ENCODE measurements at regions of chr2 and their contacts with region 1.

Region 1: GRCh38 chr2:38315707-38316333 is 61.3 kb downstream of the ATL2 start:
- DNase-seq: no peak
- ATAC-seq: peak in 3 of 4 donors; percentile 61 to 73 (median 67)
- H3K4me3 ChIP-seq: no peak overlapping the region
- H3K27ac ChIP-seq: peak overlapping the region in 1 of 12 donors; percentile 64
- H3K4me1 ChIP-seq: peaks cover 0 to 9% (median 0%) of the 10 kb centered on the region in 12 donors
- H3K27me3 ChIP-seq: no peaks in the 10 kb centered on the region
- CTCF ChIP-seq: peak; percentile 64 to 91 (median 74)
- POLR2A ChIP-seq: no peak

Region 2: DNA sequence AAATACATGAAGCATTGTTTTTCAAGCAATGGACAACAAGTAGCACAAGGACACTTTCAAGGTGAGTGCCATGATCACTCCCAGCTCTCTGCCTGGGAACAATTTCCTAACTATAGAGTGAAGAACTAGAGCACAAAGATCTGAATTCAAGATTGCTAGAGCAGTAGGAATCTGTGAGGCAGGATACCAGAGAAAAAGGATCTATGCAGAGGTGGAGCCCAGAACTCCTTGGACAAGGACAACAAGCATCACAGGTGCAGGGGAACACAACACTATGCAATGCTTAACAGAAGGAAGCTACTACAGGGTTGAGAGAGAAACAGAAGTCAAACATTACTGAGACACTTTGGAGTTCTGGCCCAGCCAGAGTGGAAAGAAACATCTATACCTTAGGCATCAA is 36.5 kb after region 1 on chr2:
- intact Hi-C with region 1: loop called in 1 of 10 experiments (anchors 5 kb)
- DNase-seq: no peak
- ATAC-seq: no peak
- H3K4me3 ChIP-seq: no peak overlapping the region
- H3K27ac ChIP-seq: no peak overlapping the region
- H3K4me1 ChIP-seq: peaks cover 0 to 16% (median 8%) of the 10 kb centered on the region in 12 donors
- H3K27me3 ChIP-seq: no peaks in the 10 kb centered on the region
- CTCF ChIP-seq: no peak
- POLR2A ChIP-seq: no peak

Region 3: GRCh38 chr2:38442643-38443541 is 127.1 kb after region 1 on chr2:
- intact Hi-C with region 1: loop called in 4 of 10 experiments (anchors 5 to 10 kb)
- DNase-seq: peak in 2 of 5 donors; percentile 11 to 48
- ATAC-seq: peak in 3 of 4 donors; percentile 55 to 72 (median 64)
- H3K4me3 ChIP-seq: no peak overlapping the region
- H3K27ac ChIP-seq: peak overlapping the region in 1 of 12 donors; percentile 65
- H3K4me1 ChIP-seq: peaks cover 0 to 30% (median 8%) of the 10 kb centered on the region in 12 donors
- H3K27me3 ChIP-seq: no peaks in the 10 kb centered on the region
- CTCF ChIP-seq: no peak
- POLR2A ChIP-seq: no peak

Region 4: DNA sequence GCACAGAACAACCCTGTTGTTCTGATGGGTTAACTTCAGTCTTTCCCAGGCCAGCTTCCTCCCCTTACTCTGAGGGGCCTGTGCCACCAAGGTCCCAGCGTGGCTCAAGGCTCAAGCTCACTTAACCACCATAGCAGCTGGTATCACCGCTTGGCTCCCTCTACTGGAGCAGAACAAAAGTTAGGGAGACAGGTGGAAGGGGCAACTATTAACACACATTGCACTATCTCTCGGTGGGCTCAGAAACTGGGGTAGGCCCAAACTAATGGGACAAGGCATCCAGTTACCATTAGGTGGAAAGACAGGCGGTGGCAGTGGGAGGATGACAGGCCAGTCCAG is 149.9 kb after region 1 on chr2:
- intact Hi-C with region 1: loop called in 6 of 10 experiments (anchors 5 to 10 kb)
- DNase-seq: peak in 1 of 5 donors; percentile 37
- ATAC-seq: peak in 3 of 4 donors; percentile 65 to 69 (median 68)
- H3K4me3 ChIP-seq: no peak overlapping the region
- H3K27ac ChIP-seq: peak overlapping the region in 1 of 12 donors; percentile 85
- H3K4me1 ChIP-seq: peaks cover 0 to 5% (median 0%) of the 10 kb centered on the region in 12 donors
- H3K27me3 ChIP-seq: no peaks in the 10 kb centered on the region
- CTCF ChIP-seq: peak in 11 of 12 donors; percentile 15 to 54 (median 43)
- POLR2A ChIP-seq: no peak

Region 5: DNA sequence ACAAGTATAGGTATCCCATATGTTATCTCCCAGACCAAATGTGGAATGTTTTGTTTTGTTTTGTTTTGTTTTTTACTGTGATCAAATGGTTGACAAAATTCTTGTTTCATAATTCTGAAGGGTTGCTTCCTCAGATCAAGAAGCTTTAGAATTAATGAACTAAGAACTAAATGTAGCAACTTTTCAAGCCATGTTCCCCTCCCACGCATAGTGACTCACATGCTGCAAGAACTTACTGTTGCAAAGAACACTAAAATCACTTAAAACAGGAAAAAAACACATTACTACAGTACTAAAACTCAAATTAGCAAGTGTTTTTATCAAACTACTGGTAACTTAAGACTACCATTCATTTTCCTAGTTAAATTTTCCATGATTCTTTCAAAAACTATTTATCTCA is 256.3 kb after region 1 on chr2:
- intact Hi-C with region 1: loop called in 1 of 10 experiments (anchors 10 kb)
- DNase-seq: no peak
- ATAC-seq: peak in 2 of 4 donors; percentile 50 to 51
- H3K4me3 ChIP-seq: no peak overlapping the region
- H3K27ac ChIP-seq: peak overlapping the region in 1 of 12 donors; percentile 2
- H3K4me1 ChIP-seq: peaks cover 0 to 16% (median 0%) of the 10 kb centered on the region in 12 donors
- H3K27me3 ChIP-seq: no peaks in the 10 kb centered on the region
- CTCF ChIP-seq: no peak
- POLR2A ChIP-seq: no peak

Region 6: GRCh38 chr2:38728694-38729093 is 412.9 kb after region 1 on chr2:
- intact Hi-C with region 1: loop called in 6 of 10 experiments (anchors 5 to 10 kb)
- DNase-seq: no peak
- ATAC-seq: no peak
- H3K4me3 ChIP-seq: no peak overlapping the region
- H3K27ac ChIP-seq: no peak overlapping the region
- H3K4me1 ChIP-seq: peaks cover 0 to 13% (median 0%) of the 10 kb centered on the region in 12 donors
- H3K27me3 ChIP-seq: no peaks in the 10 kb centered on the region
- CTCF ChIP-seq: no peak
- POLR2A ChIP-seq: no peak

Region 7: DNA sequence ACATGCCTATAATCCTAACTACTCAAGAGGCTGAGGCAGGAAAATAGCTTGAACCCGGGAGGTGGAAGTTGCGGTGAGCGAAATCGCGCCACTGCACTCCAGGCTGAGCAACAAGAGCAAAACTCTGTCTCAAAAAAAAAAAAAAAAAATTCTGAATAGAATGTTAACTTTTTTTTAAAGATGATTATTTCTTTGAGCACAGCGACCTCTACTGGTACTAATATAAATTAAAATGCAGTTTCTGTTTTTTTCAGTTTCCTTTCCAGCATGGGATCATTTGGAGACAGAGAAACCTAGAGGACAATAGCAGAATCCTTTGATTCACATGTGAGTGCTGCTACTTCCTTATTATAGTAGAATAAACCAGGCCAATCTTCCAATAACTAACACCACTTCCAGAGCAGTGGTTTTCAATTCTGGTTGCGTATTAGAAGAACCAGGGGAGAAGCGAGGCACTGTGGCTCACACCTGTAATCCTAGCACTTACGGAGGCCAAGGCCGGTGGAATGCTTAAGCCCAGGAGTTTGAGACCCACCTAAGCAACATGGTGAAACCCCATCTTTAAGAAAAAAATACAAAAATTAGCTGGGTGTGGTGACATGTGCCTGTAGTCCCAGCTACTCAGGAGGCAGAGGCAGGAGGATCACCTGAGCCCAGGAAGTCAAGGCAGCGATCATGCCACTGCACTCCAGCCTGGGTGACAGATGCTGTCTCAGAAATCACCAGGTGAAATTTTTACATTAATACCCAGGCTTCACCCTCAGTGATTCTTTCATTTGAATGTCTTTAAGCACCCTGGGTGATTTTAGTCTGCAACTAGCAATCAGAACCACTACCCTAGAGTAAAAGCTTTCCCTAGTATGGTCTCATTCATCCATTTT is 425.3 kb after region 1 on chr2:
- intact Hi-C with region 1: loop called in 8 of 10 experiments (anchors 5 to 10 kb)
- DNase-seq: no peak
- ATAC-seq: peak in 2 of 4 donors; percentile 17 to 59
- H3K4me3 ChIP-seq: peak overlapping the region in 2 of 12 donors; percentile 13 to 20
- H3K27ac ChIP-seq: peak overlapping the region in 6 of 12 donors; percentile 3 to 75 (median 16)
- H3K4me1 ChIP-seq: peaks cover 0 to 48% (median 9%) of the 10 kb centered on the region in 12 donors
- H3K27me3 ChIP-seq: no peaks in the 10 kb centered on the region
- CTCF ChIP-seq: peak; percentile 52 to 83 (median 68)
- POLR2A ChIP-seq: no peak